ENCODE measurements at regions of chr4 and their contacts with region 1.

Region 1: GRCh38 chr4:153127760-153128494 is 76.3 kb upstream of the TRIM2 start:
- DNase-seq: peak; percentile 92
- ATAC-seq: peak; percentile 90
- H3K4me3 Mint-ChIP-seq: no peak overlapping the region
- H3K27ac Mint-ChIP-seq: no peak overlapping the region
- H3K4me1 Mint-ChIP-seq: peaks cover 4% of the 10 kb centered on the region
- H3K27me3 Mint-ChIP-seq: peaks cover 2% of the 10 kb centered on the region
- CTCF ChIP-seq: peak; percentile 83

Region 2: GRCh38 chr4:152369902-152370295 is 758.0 kb before region 1 on chr4:
- CTCF ChIA-PET with region 1: no interaction called
- POLR2A ChIA-PET with region 1: no interaction called
- intact Hi-C with region 1: no loop called
- DNase-seq: no peak
- ATAC-seq: no peak
- H3K4me3 Mint-ChIP-seq: no peak overlapping the region
- H3K27ac Mint-ChIP-seq: no peak overlapping the region
- H3K4me1 Mint-ChIP-seq: peaks cover 18% of the 10 kb centered on the region
- H3K27me3 Mint-ChIP-seq: no peaks in the 10 kb centered on the region
- CTCF ChIP-seq: no peak

Region 3: DNA sequence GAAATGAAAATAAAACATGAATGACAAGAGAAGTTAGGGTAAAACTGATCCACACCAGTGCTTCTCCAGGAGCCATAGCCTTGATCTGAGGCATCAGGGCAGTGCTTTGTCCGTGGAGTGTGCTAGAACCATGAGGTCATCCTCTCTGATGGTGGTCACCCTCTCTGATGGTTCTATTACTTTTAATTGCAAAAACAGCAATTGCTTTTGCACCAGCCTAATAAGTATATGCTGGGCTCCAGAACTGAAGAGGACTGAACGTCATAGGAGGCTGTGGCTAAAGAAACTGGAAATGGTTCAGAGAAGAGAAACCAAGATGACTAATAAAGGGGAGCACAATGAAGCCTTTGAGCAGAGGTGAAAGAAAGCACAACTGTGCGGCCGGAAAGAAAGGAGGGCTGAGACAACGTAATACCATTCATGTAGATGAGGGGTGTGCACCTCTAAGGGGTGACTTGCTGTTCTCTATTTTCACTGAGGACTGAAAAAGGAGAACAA is 431.1 kb before region 1 on chr4:
- CTCF ChIA-PET with region 1: no interaction called
- POLR2A ChIA-PET with region 1: no interaction called
- intact Hi-C with region 1: no loop called
- DNase-seq: peak; percentile 72
- ATAC-seq: peak; percentile 98
- H3K4me3 Mint-ChIP-seq: no peak overlapping the region
- H3K27ac Mint-ChIP-seq: peak overlapping the region; percentile 21
- H3K4me1 Mint-ChIP-seq: peaks cover 13% of the 10 kb centered on the region
- H3K27me3 Mint-ChIP-seq: no peaks in the 10 kb centered on the region
- CTCF ChIP-seq: no peak

Region 4: GRCh38 chr4:152850377-152850776 is 277.6 kb before region 1 on chr4:
- CTCF ChIA-PET with region 1: interaction called, 58 read pairs
- POLR2A ChIA-PET with region 1: no interaction called
- intact Hi-C with region 1: no loop called
- DNase-seq: peak; percentile 68
- ATAC-seq: peak; percentile 79
- H3K4me3 Mint-ChIP-seq: no peak overlapping the region
- H3K27ac Mint-ChIP-seq: peak overlapping the region; percentile 29
- H3K4me1 Mint-ChIP-seq: peaks cover 19% of the 10 kb centered on the region
- H3K27me3 Mint-ChIP-seq: no peaks in the 10 kb centered on the region
- CTCF ChIP-seq: no peak

Region 5: GRCh38 chr4:153083447-153083947 is 44.4 kb before region 1 on chr4:
- CTCF ChIA-PET with region 1: interaction called, 428 read pairs
- POLR2A ChIA-PET with region 1: interaction called, 4 read pairs
- intact Hi-C with region 1: loop called (anchors 1 kb)
- DNase-seq: peak; percentile 64
- ATAC-seq: peak; percentile 54
- H3K4me3 Mint-ChIP-seq: no peak overlapping the region
- H3K27ac Mint-ChIP-seq: peak overlapping the region; percentile 43
- H3K4me1 Mint-ChIP-seq: peaks cover 25% of the 10 kb centered on the region
- H3K27me3 Mint-ChIP-seq: peaks cover 10% of the 10 kb centered on the region
- CTCF ChIP-seq: peak; percentile 71

Region 6: GRCh38 chr4:153095448-153096204 is 32.3 kb before region 1 on chr4:
- CTCF ChIA-PET with region 1: interaction called, 49 read pairs
- POLR2A ChIA-PET with region 1: no interaction called
- intact Hi-C with region 1: no loop called
- DNase-seq: no peak
- ATAC-seq: no peak
- H3K4me3 Mint-ChIP-seq: no peak overlapping the region
- H3K27ac Mint-ChIP-seq: no peak overlapping the region
- H3K4me1 Mint-ChIP-seq: peaks cover 3% of the 10 kb centered on the region
- H3K27me3 Mint-ChIP-seq: no peaks in the 10 kb centered on the region
- CTCF ChIP-seq: no peak

Region 7: DNA sequence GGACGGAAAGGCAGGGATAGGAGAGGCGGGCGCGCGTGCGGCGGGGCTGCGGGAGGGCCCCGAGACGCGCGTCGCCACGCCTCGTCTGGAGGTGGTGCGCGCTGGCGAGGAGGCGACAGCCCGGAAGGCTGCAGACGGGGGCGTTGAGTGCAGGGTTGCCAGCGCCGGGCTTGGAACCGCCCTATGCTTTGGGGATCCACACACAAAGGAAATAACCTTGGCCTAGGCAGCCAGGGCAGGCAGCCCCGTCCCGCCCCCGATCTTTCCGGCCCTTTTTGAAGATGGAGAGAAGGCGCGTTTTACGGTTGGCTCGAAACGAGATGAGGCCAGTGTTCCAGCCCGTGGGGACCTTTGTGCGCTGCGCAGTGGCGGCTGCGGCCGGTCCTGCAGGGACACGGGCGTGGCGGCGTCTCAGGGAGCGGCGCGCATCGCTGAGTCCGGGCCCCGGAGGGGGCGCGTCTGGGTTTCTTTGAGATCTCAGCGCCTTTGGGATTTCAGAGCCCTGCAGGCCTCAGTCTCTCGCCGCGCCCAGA is 25.5 kb after region 1 on chr4:
- CTCF ChIA-PET with region 1: interaction called, 13 read pairs
- POLR2A ChIA-PET with region 1: no interaction called
- intact Hi-C with region 1: no loop called
- DNase-seq: peak; percentile 87
- ATAC-seq: peak; percentile 90
- H3K4me3 Mint-ChIP-seq: peak overlapping the region; percentile 72
- H3K27ac Mint-ChIP-seq: peak overlapping the region; percentile 66
- H3K4me1 Mint-ChIP-seq: peaks cover 40% of the 10 kb centered on the region
- H3K27me3 Mint-ChIP-seq: peaks cover 24% of the 10 kb centered on the region
- CTCF ChIP-seq: no peak

Region 8: GRCh38 chr4:153643406-153644383 is 515.8 kb after region 1 on chr4:
- CTCF ChIA-PET with region 1: interaction called, 14 read pairs
- POLR2A ChIA-PET with region 1: no interaction called
- intact Hi-C with region 1: no loop called
- DNase-seq: no peak
- ATAC-seq: peak; percentile 94
- H3K4me3 Mint-ChIP-seq: no peak overlapping the region
- H3K27ac Mint-ChIP-seq: peak overlapping the region; percentile 13
- H3K4me1 Mint-ChIP-seq: peaks cover 9% of the 10 kb centered on the region
- H3K27me3 Mint-ChIP-seq: no peaks in the 10 kb centered on the region
- CTCF ChIP-seq: peak; percentile 73

Measured in activated CD8-positive, alpha-beta T cell treated with anti-CD3 and anti-CD28 coated beads for 36 hours (primary cell).